ENCODE measurements at regions of chr14 and their contacts with region 1.

Region 1: DNA sequence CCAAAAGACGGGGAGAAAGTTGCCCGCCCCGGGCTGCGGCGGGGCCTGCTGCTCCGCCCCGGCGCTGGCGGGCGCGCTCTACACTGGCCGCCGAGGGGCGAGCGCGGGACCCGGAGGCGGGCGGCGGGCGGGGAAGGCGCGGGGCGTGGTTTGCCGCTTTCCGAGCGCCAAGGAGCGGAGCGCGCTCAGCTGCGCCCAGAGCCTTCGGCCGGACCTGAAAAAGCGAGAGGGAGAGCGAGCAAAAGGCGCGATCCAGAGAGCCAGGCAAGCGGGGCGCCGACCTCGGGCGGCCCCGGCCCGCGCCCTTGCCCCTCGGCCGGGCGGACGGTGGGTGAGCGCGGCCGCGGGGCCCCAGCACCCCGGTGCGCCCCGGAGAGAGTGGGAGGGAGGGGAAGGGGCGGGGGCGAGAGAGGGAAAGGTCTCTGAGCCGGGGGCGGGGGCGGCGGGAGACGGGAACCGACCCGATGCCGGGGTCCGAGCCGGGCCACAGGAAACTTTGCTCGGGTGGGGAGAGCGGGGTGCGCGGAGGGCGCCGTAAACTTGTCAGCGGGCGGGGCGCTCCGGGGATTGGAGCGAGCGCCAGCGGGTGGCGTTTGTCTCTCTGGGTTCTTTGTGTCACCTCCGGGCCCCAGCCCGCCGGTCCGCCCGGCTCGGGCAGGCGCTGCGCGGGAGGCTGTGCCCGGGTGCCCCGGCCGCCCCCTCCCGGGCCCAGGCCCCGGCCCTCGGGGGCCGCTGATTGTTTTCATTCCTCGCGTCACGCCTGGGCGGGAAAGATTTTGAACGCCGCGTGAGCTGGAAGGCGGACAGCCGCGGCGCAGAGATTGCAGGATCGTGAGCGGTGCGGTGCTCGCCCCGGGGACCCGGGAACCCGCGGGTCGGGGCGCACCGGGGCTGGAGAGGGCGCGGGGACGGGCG is at the start of gene SYNE2:
- DNase-seq: peak; percentile 85
- H3K4me3 ChIP-seq: peak within 1 kb of the TSS; percentile 61 to 91 (median 75)
- H3K27ac ChIP-seq: peak within 1 kb of the TSS; percentile 95 to 99 (median 95)
- H3K4me1 ChIP-seq: peaks cover 22 to 29% of the 10 kb centered on the region in 2 donors
- H3K27me3 ChIP-seq: no peaks in the 10 kb centered on the region
- CTCF ChIP-seq: peak in 3 of 6 experiments; percentile 43 to 52 (median 48)
- POLR2A ChIP-seq: peak in 1 of 2 donors; percentile 97
- total RNA-seq, gene SYNE2: 314 to 379 (median 342) TPM

Region 2: DNA sequence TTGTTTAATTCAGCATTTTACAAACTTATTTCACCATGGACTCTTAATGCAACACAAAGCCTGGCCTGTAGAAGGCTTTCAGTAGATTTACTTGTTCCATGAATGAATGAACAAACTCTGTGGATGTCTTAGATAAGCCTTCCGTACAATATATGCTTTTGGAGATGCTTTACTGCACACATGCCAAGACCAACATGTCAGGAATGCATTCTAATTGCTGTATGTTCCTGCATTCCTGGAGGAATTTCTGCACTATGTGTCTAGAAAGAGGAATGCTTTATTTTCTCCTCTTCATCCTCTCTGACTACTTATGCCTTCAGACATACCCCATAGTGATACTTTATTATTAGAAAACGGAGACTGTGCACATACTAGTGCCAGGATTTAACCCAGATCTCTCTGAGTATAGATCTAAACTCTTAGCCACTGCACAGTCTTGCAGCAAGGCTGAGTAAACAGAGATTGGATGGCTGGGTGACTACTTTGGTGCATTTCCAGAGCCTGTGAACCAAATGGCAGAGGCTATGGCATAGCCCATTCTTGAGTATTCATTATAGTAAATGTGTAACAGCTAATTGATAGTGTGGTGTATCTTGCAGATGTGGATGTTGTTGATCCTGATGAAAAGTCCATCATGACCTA is 108.0 kb after region 1 on chr14:
- intact Hi-C with region 1: loop called (anchors 10 kb)
- DNase-seq: no peak
- H3K4me3 ChIP-seq: no peak overlapping the region
- H3K27ac ChIP-seq: peak overlapping the region in 1 of 3 donors; percentile 23
- H3K4me1 ChIP-seq: peaks cover 12 to 14% of the 10 kb centered on the region in 2 donors
- H3K27me3 ChIP-seq: no peaks in the 10 kb centered on the region
- CTCF ChIP-seq: no peak
- POLR2A ChIP-seq: no peak